ENCODE measurements at regions of chr15 and their contacts with region 1.

Region 1: DNA sequence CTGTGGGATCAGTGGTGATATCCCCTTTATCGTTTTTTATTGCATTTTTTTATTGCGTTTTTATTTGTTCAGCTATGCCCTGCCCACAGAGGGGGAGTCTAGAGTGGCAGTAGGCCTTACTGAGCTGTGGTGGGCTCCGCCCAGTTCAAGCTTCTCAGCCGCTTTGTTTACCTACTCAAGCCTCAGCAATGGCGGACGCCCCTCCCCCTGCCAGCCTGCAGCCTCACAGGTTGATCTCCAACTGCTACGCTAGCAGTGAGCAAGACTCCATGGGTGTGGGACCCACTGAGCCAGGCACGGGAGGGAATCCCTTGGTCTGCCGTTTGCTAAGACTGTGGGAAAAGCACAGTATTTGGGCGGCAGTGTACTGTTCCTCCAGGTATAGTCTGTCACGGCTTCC is 500.6 kb upstream of the MCTP2 start:
- DNase-seq: no peak
- H3K4me3 ChIP-seq: no peak overlapping the region
- CTCF ChIP-seq: no peak
- POLR2A ChIP-seq: no peak

Region 2: DNA sequence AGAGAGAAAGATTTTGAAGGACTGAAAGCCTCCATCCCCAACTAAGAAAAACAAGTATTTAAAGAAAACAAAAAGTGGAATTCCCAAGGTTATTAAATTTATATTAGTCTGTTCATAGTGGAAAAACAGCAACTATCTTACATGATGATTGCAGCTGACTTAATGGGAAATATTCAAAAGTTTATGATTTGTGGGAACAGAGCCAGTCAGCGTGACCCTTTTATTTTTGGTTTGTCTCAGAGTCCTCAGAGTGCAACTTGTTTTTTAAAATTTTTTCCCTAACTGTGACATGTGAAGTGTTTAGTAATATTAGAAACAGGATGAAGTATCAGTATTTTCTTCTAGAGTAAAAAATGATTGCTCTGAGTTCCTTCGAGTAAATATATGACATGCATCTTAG is 58.7 kb after region 1 on chr15:
- intact Hi-C with region 1: no loop called
- DNase-seq: no peak
- H3K4me3 ChIP-seq: no peak overlapping the region
- CTCF ChIP-seq: no peak
- POLR2A ChIP-seq: no peak

Region 3: GRCh38 chr15:93803421-93804153 is 72.9 kb after region 1 on chr15:
- intact Hi-C with region 1: no loop called
- DNase-seq: peak; percentile 57 to 91
- H3K4me3 ChIP-seq: no peak overlapping the region
- CTCF ChIP-seq: no peak
- POLR2A ChIP-seq: no peak

Region 4: DNA sequence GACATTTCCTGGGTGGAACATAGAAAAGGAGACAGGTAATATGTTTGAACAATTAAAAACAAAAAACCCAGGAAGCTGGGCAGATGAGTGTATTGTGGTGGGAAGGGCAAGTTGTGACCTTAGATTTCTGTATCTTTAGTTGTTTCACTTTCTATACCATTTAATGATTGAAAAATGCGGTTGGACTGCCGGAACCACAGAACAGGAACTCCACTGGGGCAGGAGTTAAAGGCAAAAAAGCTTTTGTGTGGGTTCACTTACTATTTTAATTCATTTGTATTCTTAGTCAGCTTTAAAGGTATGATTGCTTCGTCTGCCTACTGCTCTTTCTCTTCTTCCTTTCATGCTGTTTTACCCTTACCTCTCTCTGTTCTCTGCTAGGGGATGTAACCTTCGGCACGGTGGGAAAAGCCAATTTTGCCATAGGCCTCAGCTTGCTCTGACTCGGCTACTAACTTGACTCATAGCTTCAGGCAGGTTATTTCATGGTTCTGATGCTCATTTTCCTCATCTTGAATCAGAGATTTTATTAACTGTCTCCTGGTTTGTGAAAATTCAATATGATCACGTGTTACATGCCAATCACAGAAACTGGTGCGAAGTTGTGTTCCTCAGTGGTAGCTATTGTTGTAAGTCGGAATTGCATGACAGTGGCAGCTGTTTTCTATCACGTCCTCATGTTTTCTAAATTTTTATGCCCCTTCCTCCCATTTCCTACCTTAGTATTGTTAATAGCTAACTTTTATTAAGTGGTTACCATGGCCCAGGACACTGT is 499.1 kb after region 1 on chr15:
- intact Hi-C with region 1: loop called (anchors 5 kb)
- DNase-seq: no peak
- H3K4me3 ChIP-seq: no peak overlapping the region
- CTCF ChIP-seq: no peak
- POLR2A ChIP-seq: no peak